Heart left ventricle (tissue), 16 donors: ENCODE measurements at regions of chr19 and their contacts with region 1.

Region 1: DNA sequence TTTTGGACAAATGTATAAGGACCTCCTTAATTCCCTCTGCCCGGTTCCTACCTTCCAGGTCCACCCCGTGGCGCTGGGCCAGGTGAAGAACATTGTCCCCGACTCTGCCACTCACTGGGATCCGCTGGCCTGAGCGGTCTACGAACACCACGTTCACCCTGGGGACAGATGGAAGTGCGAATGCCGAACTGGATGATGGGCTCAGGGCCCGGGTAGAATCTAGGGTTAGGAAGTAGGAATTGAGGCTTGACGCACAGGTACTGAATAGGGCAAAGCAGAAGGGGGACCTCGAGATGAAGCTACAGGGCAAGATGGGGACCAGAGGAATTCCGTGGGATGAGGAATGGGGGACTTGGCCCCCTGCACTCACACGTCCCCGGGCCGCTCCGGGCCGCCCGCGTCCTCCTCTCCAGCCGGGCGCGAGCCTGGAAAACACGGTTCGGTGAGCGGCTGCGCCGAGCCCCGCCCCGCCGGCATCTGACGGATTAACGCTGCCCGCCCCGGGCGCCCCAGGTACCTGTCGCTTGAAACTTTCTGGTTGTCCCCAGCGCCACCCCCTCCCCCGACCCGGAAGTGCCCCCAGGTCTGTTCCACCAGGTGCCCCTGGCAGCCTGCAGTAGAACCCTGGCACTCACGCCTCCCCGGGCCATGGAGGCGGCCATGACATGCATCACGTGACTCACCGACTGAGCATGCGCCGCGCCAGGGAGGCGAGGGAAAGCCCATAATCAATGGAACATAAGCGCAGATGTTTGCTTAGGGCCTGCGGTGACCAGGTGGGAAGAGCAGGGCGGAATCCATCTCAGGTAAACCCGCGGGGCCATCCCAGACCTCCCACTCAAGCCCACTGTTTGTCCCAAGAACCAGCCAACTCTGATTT is at the start of gene FDX2:
- DNase-seq: peak; percentile 84 to 94 (median 90)
- ATAC-seq: peak; percentile 82 to 95 (median 92)
- H3K4me3 ChIP-seq: peak within 1 kb of the TSS; percentile 52 to 95 (median 80)
- H3K27ac ChIP-seq: peak within 1 kb of the TSS in 11 of 12 donors; percentile 12 to 77 (median 46)
- H3K4me1 ChIP-seq: peaks cover 0 to 20% (median 13%) of the 10 kb centered on the region in 12 donors
- H3K27me3 ChIP-seq: no peaks in the 10 kb centered on the region
- CTCF ChIP-seq: no peak
- POLR2A ChIP-seq: peak in 1 of 2 donors; percentile 18
- total RNA-seq, gene FDX2: 12.8 to 22.0 (median 16.6) TPM

Region 2: GRCh38 chr19:10269333-10270179 is 46.0 kb before region 1 on chr19:
- intact Hi-C with region 1: no loop called
- DNase-seq: peak; percentile 87 to 94 (median 90)
- ATAC-seq: peak; percentile 79 to 88 (median 84)
- H3K4me3 ChIP-seq: peak overlapping the region; percentile 19 to 78 (median 60)
- H3K27ac ChIP-seq: peak overlapping the region; percentile 69 to 99 (median 88)
- H3K4me1 ChIP-seq: peaks cover 0 to 73% (median 17%) of the 10 kb centered on the region in 12 donors
- H3K27me3 ChIP-seq: peaks cover 0 to 23% (median 3%) of the 10 kb centered on the region in 9 donors
- CTCF ChIP-seq: peak; percentile 94 to 98 (median 96)
- POLR2A ChIP-seq: no peak

Region 3: GRCh38 chr19:10363789-10364281 is 48.3 kb after region 1 on chr19:
- intact Hi-C with region 1: loop called in 1 of 10 experiments (anchors 5 kb)
- DNase-seq: no peak
- ATAC-seq: no peak
- H3K4me3 ChIP-seq: no peak overlapping the region
- H3K27ac ChIP-seq: no peak overlapping the region
- H3K4me1 ChIP-seq: no peaks in the 10 kb centered on the region
- H3K27me3 ChIP-seq: no peaks in the 10 kb centered on the region
- CTCF ChIP-seq: no peak
- POLR2A ChIP-seq: no peak